GM18951 (cell line): ENCODE measurements at regions of chr12 and their contacts with region 1.

Region 1: GRCh38 chr12:59834659-59835474 is 239.0 kb downstream of the SLC16A7 start:
- POLR2A ChIP-seq: no peak

Region 2: DNA sequence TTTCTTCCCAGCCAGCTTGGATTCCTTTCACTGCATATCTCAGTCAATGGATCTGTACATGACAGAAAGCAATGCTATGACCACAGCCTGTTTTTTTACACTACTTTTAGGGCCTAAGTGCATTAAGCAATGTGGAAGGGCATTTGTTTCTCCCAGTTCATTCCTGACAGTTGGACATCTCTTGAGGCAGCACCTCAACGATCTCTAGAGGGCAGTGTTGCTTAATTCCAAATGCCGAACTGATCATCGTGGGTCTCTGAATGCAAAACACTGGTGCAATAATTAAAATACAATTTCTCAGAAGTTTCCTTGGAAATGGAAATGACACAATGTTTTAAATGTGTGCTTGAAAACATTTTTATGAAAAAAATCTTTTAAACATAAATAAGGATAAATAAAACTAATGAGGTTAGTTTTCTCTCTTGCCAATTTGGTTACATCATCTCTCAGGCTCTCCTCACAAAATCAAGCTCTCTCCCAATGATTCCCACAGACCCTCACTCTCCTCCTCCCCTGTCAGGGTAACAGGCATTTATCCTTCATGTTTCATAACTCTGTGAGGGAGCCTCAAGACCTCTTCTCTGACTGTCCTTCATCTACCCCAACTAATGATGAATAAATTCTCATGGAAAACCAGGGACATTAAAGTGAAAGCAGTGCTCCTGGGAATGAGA is 431.5 kb before region 1 on chr12:
- in situ Hi-C with region 1: loop called (anchors 25 kb)
- POLR2A ChIP-seq: no peak